OCI-LY7 (cell line): ENCODE measurements at regions of chr7 and their contacts with region 1.

Region 1: GRCh38 chr7:111508387-111508786 is 53.9 kb downstream of the IMMP2L start:
- DNase-seq: no peak
- H3K4me3 ChIP-seq: no peak overlapping the region
- H3K27ac ChIP-seq: no peak overlapping the region
- H3K4me1 ChIP-seq: no peaks in the 10 kb centered on the region
- CTCF ChIP-seq: no peak

Region 2: GRCh38 chr7:111527545-111527944 is 19.2 kb after region 1 on chr7:
- CTCF ChIA-PET with region 1: no interaction called
- POLR2A ChIA-PET with region 1: interaction called, 11 read pairs
- intact Hi-C with region 1: no loop called
- DNase-seq: peak; percentile 68
- H3K4me3 ChIP-seq: peak overlapping the region; percentile 56
- H3K27ac ChIP-seq: peak overlapping the region; percentile 84
- H3K4me1 ChIP-seq: peaks cover 59% of the 10 kb centered on the region
- CTCF ChIP-seq: no peak

Region 3: DNA sequence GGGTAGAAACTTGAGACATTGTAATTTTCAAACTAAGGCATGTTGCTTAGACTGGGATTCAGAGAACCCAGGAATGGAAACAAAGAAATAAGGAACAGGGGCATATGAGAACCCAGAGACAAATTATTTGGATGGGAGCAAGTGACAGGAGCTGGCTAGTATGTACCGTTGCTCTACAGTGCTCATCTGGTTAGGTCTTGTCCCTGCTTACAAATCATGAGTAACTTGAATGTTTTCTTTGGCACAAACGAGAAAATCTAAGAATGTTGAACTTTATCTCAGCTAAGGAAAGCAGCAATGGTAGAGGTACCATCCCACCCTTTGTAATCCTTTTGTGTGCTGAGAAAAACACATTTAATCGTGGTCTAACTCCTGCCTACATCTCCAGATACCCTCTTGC is 169.9 kb after region 1 on chr7:
- CTCF ChIA-PET with region 1: no interaction called
- POLR2A ChIA-PET with region 1: no interaction called
- intact Hi-C with region 1: no loop called
- DNase-seq: no peak
- H3K4me3 ChIP-seq: no peak overlapping the region
- H3K27ac ChIP-seq: no peak overlapping the region
- H3K4me1 ChIP-seq: no peaks in the 10 kb centered on the region
- CTCF ChIP-seq: no peak

Region 4: DNA sequence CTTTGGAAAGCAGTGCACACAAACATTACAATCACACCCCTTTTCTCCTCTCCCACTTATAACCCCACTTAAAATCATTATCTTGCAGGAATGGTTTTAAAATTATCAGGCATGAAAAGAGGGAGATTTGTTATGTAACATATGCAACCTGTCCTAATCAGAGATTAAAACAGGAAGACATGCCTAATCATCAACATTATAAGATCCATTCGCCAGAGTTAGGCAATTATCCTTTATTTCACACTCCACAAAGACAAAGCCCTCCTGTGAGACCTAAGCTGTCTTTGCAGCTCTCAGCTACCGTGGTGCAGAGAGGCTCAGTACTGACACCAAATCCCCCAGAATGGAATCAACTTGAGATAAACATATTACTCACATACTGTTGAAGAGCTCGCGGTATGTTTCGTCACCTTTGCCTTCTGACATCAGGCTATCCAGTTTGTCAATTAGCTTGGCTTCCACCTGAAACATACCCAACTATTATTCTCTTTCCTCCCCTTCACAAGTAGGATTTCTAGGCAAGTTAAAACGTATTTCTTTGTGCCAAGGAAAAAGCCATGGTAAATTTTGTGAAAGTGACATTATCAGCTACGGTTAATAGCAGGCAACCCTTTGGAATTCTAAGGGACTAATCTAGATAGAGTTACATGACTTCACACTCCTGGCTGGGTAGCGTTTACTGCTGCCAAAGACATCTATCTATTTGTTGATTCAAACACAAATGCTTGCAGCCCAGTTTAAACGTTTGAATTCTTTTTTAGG is 280.1 kb after region 1 on chr7:
- CTCF ChIA-PET with region 1: no interaction called
- POLR2A ChIA-PET with region 1: no interaction called
- intact Hi-C with region 1: no loop called
- DNase-seq: no peak
- H3K4me3 ChIP-seq: no peak overlapping the region
- H3K27ac ChIP-seq: no peak overlapping the region
- H3K4me1 ChIP-seq: no peaks in the 10 kb centered on the region
- CTCF ChIP-seq: no peak